ENCODE measurements at regions of chr2 and their contacts with region 1.

Region 1: DNA sequence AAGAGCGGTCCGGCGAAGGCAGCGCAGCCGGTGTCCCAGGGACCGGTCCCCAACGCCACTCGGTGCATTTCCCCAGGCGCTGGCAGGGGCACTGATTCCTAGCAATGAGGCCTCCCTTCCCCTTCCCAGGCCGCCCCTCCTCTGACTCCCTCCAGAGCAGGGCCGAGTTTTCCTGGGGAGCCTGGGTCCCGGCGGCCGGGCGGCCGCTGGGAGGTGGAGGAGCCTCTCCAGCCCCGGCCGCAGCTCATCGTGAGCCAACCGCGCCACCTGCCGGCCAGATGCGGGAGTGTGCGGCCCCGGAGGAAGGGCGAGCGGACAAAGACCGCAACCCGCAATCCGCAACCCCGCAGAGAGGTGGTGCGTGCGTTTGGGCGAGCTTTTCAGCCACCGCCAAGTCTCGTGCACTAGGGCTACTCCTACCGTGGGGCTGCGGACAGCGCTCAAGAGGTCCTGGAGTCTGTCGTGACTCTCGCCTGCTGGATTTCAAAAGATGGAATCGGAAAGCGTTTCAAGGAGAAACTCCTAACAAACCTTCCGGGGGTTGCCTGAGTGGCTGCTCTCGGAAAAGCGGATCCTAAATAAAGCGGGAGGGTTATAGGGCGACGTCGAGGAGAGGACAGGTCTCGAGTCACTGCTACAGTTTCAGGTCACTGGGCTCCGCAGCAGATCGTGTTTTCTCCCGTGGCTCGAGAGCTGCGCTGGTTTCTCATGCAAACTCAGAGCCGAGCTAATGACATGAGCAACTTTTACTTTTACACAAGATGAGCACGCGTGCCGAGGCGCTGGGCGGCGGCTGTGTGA is 1.5 kb upstream of the EPHA4 start:
- DNase-seq: peak; percentile 55 to 88 (median 74)
- ATAC-seq: peak; percentile 31
- H3K4me3 ChIP-seq: peak overlapping the region; percentile 84
- H3K4me3 Mint-ChIP-seq: peak overlapping the region; percentile 89
- H3K27ac ChIP-seq: no peak overlapping the region
- H3K27ac Mint-ChIP-seq: peak overlapping the region; percentile 28
- H3K4me1 ChIP-seq: peaks cover 47% of the 10 kb centered on the region
- H3K4me1 Mint-ChIP-seq: peaks cover 31% of the 10 kb centered on the region
- H3K27me3 ChIP-seq: peaks cover 13 to 64% of the 10 kb centered on the region in 2 experiments
- H3K27me3 Mint-ChIP-seq: peaks cover 52% of the 10 kb centered on the region
- CTCF ChIP-seq: peak; percentile 99

Region 2: GRCh38 chr2:220544063-220544462 is 1029.6 kb before region 1 on chr2:
- CTCF ChIA-PET with region 1: no interaction called
- POLR2A ChIA-PET with region 1: no interaction called
- intact Hi-C with region 1: no loop called
- DNase-seq: no peak
- ATAC-seq: no peak
- H3K4me3 ChIP-seq: no peak overlapping the region
- H3K4me3 Mint-ChIP-seq: no peak overlapping the region
- H3K27ac ChIP-seq: no peak overlapping the region
- H3K27ac Mint-ChIP-seq: no peak overlapping the region
- H3K4me1 ChIP-seq: no peaks in the 10 kb centered on the region
- H3K4me1 Mint-ChIP-seq: no peaks in the 10 kb centered on the region
- H3K27me3 ChIP-seq: no peaks in the 10 kb centered on the region
- H3K27me3 Mint-ChIP-seq: no peaks in the 10 kb centered on the region
- CTCF ChIP-seq: no peak

Region 3: GRCh38 chr2:220687231-220687843 is 886.3 kb before region 1 on chr2:
- CTCF ChIA-PET with region 1: interaction called, 3 read pairs
- POLR2A ChIA-PET with region 1: interaction called, 9 read pairs
- intact Hi-C with region 1: loop called in 1 of 2 experiments (anchors 1 kb)
- DNase-seq: peak; percentile 28 to 73 (median 50)
- ATAC-seq: peak; percentile 89
- H3K4me3 ChIP-seq: no peak overlapping the region
- H3K4me3 Mint-ChIP-seq: no peak overlapping the region
- H3K27ac ChIP-seq: no peak overlapping the region
- H3K27ac Mint-ChIP-seq: no peak overlapping the region
- H3K4me1 ChIP-seq: no peaks in the 10 kb centered on the region
- H3K4me1 Mint-ChIP-seq: no peaks in the 10 kb centered on the region
- H3K27me3 ChIP-seq: no peaks in the 10 kb centered on the region
- H3K27me3 Mint-ChIP-seq: peaks cover 36% of the 10 kb centered on the region
- CTCF ChIP-seq: peak; percentile 89

Region 4: DNA sequence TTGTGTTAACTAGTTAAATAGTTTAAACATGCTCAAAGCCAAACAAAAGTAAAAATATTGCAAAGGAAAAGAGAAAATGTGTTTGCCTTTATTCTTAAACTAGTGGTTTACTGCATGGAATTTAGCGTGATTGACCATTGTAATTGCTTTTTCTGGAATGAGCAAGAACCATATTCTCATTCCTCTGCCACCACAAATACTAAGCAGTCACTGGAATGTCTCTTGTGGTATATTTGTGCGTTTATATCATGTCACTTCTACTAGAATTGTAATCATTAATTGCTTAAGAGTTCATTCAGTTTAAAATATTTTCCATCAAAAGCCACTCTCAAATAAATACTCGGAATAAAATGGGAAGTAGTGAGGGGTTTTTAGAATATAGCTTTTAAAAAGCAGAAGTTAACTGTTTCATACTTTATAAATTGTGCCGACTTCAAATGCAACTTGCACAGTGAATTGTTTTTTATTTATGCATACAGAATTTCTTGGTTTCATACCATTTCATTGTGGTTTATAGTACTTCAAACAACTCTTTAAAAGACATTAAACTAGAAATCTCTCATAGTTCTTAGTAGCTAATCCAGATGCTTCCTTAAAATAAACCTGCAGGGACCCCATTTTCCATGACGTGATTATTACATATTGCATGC is 289.6 kb before region 1 on chr2:
- CTCF ChIA-PET with region 1: no interaction called
- POLR2A ChIA-PET with region 1: no interaction called
- intact Hi-C with region 1: no loop called
- DNase-seq: no peak
- ATAC-seq: no peak
- H3K4me3 ChIP-seq: no peak overlapping the region
- H3K4me3 Mint-ChIP-seq: no peak overlapping the region
- H3K27ac ChIP-seq: no peak overlapping the region
- H3K27ac Mint-ChIP-seq: no peak overlapping the region
- H3K4me1 ChIP-seq: no peaks in the 10 kb centered on the region
- H3K4me1 Mint-ChIP-seq: no peaks in the 10 kb centered on the region
- H3K27me3 ChIP-seq: peaks cover 0 to 6% of the 10 kb centered on the region in 2 experiments
- H3K27me3 Mint-ChIP-seq: peaks cover 3% of the 10 kb centered on the region
- CTCF ChIP-seq: no peak

Region 5: GRCh38 chr2:221309892-221310583 is 263.6 kb before region 1 on chr2:
- CTCF ChIA-PET with region 1: no interaction called
- POLR2A ChIA-PET with region 1: no interaction called
- intact Hi-C with region 1: loop called in 1 of 2 experiments (anchors 10 kb)
- DNase-seq: no peak
- ATAC-seq: no peak
- H3K4me3 ChIP-seq: no peak overlapping the region
- H3K4me3 Mint-ChIP-seq: no peak overlapping the region
- H3K27ac ChIP-seq: no peak overlapping the region
- H3K27ac Mint-ChIP-seq: no peak overlapping the region
- H3K4me1 ChIP-seq: no peaks in the 10 kb centered on the region
- H3K4me1 Mint-ChIP-seq: peaks cover 11% of the 10 kb centered on the region
- H3K27me3 ChIP-seq: no peaks in the 10 kb centered on the region
- H3K27me3 Mint-ChIP-seq: no peaks in the 10 kb centered on the region
- CTCF ChIP-seq: no peak

Region 6: DNA sequence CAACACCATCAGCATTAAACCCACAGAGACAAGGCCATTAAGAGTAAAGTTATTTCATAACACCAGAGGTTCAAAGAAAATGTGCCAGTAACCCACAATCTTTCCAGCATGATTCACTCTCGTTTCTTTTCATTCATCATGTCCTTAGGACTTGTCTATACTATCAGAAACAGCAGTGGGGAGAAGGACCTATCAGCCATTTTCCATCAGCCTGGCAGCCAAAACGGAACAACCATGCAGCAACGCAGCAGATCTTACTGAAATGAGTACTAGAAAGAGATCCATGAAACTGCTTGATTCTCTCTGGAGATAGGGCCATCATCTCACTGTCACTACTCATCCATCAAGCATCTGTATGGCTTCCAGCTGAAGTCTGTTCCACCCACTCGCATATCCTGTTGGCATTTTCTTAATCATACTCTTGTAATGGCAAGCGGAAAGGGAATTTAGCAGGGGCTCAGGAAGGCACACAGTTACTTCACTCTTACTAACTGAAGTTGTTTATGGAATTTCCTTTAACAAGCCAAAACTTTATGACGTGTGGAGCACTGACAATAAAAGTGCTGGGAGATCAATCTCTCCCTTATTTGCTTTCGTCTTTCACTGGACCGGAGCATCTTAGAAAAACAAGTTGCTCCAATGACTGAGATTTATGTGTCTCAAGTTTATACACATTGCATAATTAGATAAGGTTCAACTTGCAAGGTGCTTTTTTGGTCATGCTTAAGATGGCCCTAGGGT is 71.2 kb before region 1 on chr2:
- CTCF ChIA-PET with region 1: interaction called, 8 read pairs
- POLR2A ChIA-PET with region 1: interaction called, 15 read pairs
- intact Hi-C with region 1: loop called (anchors 1 to 5 kb)
- DNase-seq: no peak
- ATAC-seq: no peak
- H3K4me3 ChIP-seq: no peak overlapping the region
- H3K4me3 Mint-ChIP-seq: no peak overlapping the region
- H3K27ac ChIP-seq: no peak overlapping the region
- H3K27ac Mint-ChIP-seq: no peak overlapping the region
- H3K4me1 ChIP-seq: peaks cover 4% of the 10 kb centered on the region
- H3K4me1 Mint-ChIP-seq: peaks cover 36% of the 10 kb centered on the region
- H3K27me3 ChIP-seq: no peaks in the 10 kb centered on the region
- H3K27me3 Mint-ChIP-seq: no peaks in the 10 kb centered on the region
- CTCF ChIP-seq: no peak

Region 7: GRCh38 chr2:221529943-221530652 is 43.5 kb before region 1 on chr2:
- CTCF ChIA-PET with region 1: no interaction called
- POLR2A ChIA-PET with region 1: interaction called, 13 read pairs
- intact Hi-C with region 1: loop called in 1 of 2 experiments (anchors 5 kb)
- DNase-seq: peak in 4 of 14 experiments; percentile 21 to 54 (median 50)
- ATAC-seq: peak; percentile 74
- H3K4me3 ChIP-seq: peak overlapping the region; percentile 31
- H3K4me3 Mint-ChIP-seq: peak overlapping the region; percentile 47
- H3K27ac ChIP-seq: peak overlapping the region; percentile 8 to 65
- H3K27ac Mint-ChIP-seq: peak overlapping the region; percentile 91
- H3K4me1 ChIP-seq: peaks cover 48% of the 10 kb centered on the region
- H3K4me1 Mint-ChIP-seq: peaks cover 80% of the 10 kb centered on the region
- H3K27me3 ChIP-seq: no peaks in the 10 kb centered on the region
- H3K27me3 Mint-ChIP-seq: no peaks in the 10 kb centered on the region
- CTCF ChIP-seq: no peak

Region 8: DNA sequence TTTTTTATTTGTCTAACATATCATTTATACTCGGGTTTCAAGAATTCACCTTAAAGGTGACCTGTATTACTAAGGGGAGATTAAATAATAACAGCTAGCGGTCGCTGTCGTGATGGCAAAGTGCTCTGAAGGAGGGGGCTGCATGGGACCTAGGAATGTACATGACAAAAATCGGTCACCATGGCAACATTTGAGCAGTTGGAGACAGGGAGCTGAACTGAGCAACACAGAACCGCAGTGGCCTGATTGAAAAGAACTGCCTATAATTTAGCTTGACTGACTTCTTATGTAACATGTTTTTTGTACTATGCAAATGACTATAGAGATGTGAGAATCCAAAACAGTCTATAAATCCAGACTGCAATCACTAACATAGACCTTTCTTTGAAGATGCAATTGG is 32.8 kb after region 1 on chr2:
- CTCF ChIA-PET with region 1: no interaction called
- POLR2A ChIA-PET with region 1: no interaction called
- intact Hi-C with region 1: no loop called
- DNase-seq: no peak
- ATAC-seq: no peak
- H3K4me3 ChIP-seq: no peak overlapping the region
- H3K4me3 Mint-ChIP-seq: no peak overlapping the region
- H3K27ac ChIP-seq: no peak overlapping the region
- H3K27ac Mint-ChIP-seq: no peak overlapping the region
- H3K4me1 ChIP-seq: no peaks in the 10 kb centered on the region
- H3K4me1 Mint-ChIP-seq: no peaks in the 10 kb centered on the region
- H3K27me3 ChIP-seq: peaks cover 0 to 3% of the 10 kb centered on the region in 2 experiments
- H3K27me3 Mint-ChIP-seq: peaks cover 8% of the 10 kb centered on the region
- CTCF ChIP-seq: no peak

Measured in CD4-positive, alpha-beta T cell (primary cell).